Endothelial cell of umbilical vein (primary cell): ENCODE measurements at regions of chr2 and their contacts with region 1.

Region 1: GRCh38 chr2:41853427-41854216 is 194.2 kb upstream of the PKDCC start:
- DNase-seq: peak; percentile 53
- H3K4me3 ChIP-seq: no peak overlapping the region
- H3K27ac ChIP-seq: no peak overlapping the region
- H3K4me1 ChIP-seq: no peaks in the 10 kb centered on the region
- H3K27me3 ChIP-seq: peaks cover 4% of the 10 kb centered on the region in 2 experiments
- CTCF ChIP-seq: peak; percentile 53 to 66
- POLR2A ChIP-seq: no peak

Region 2: GRCh38 chr2:41527525-41528323 is 325.9 kb before region 1 on chr2:
- CTCF ChIA-PET with region 1: no interaction called
- POLR2A ChIA-PET with region 1: no interaction called
- dilution Hi-C with region 1: no loop called
- intact Hi-C with region 1: no loop called
- DNase-seq: no peak
- H3K4me3 ChIP-seq: no peak overlapping the region
- H3K27ac ChIP-seq: no peak overlapping the region
- H3K4me1 ChIP-seq: no peaks in the 10 kb centered on the region
- H3K27me3 ChIP-seq: no peaks in the 10 kb centered on the region
- CTCF ChIP-seq: no peak
- POLR2A ChIP-seq: no peak

Region 3: DNA sequence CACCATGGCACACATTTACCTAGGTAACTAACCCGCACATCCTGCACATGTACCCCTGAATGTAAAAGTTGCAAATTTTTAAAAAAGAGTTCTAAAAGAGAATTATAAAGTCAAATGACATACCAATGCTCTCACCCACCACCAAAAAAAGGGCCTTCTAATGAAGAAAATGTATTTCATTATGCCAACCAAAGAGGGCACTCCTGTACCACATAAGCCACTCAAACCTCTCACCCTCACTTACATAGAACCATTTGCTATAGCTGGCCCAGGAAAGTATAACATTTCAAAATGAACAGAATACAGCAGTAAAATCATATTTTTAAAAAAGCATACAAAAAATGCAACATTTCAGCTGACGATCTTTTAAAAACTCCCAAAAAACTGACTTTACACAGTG is 47.3 kb before region 1 on chr2:
- CTCF ChIA-PET with region 1: no interaction called
- POLR2A ChIA-PET with region 1: no interaction called
- dilution Hi-C with region 1: no loop called
- intact Hi-C with region 1: no loop called
- DNase-seq: no peak
- H3K4me3 ChIP-seq: no peak overlapping the region
- H3K27ac ChIP-seq: no peak overlapping the region
- H3K4me1 ChIP-seq: no peaks in the 10 kb centered on the region
- H3K27me3 ChIP-seq: no peaks in the 10 kb centered on the region
- CTCF ChIP-seq: no peak
- POLR2A ChIP-seq: no peak

Region 4: GRCh38 chr2:41840702-41841551 is 12.7 kb before region 1 on chr2:
- CTCF ChIA-PET with region 1: interaction called, 28 read pairs
- POLR2A ChIA-PET with region 1: no interaction called
- dilution Hi-C with region 1: no loop called
- intact Hi-C with region 1: no loop called
- DNase-seq: peak; percentile 94
- H3K4me3 ChIP-seq: peak overlapping the region; percentile 27 to 69 (median 60)
- H3K27ac ChIP-seq: no peak overlapping the region
- H3K4me1 ChIP-seq: peaks cover 7% of the 10 kb centered on the region
- H3K27me3 ChIP-seq: peaks cover 15 to 18% of the 10 kb centered on the region in 2 experiments
- CTCF ChIP-seq: peak; percentile 92 to 96
- POLR2A ChIP-seq: peak; percentile 28

Region 5: DNA sequence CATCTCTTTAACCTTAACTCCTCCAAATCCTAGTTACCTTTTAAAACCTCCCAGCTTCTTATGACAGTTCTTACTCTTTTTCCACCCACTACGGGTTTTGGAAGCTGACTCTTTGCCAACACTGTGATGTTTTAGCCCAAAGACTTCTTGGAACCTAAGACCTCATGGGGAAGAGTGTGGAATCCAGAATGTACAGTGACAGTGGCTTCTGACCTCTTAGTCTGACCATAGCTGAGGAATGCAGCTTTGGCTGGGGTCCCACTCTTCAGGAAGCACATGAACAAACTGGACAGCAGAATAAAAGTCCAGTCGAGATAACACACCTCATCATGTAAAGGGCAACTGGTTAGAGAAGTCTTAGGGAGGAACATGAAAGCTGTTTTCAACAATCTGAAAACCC is 33.1 kb after region 1 on chr2:
- CTCF ChIA-PET with region 1: interaction called, 11 read pairs
- POLR2A ChIA-PET with region 1: no interaction called
- dilution Hi-C with region 1: no loop called
- intact Hi-C with region 1: no loop called
- DNase-seq: peak; percentile 21
- H3K4me3 ChIP-seq: no peak overlapping the region
- H3K27ac ChIP-seq: no peak overlapping the region
- H3K4me1 ChIP-seq: no peaks in the 10 kb centered on the region
- H3K27me3 ChIP-seq: peaks cover 2 to 3% of the 10 kb centered on the region in 2 experiments
- CTCF ChIP-seq: no peak
- POLR2A ChIP-seq: no peak

Region 6: GRCh38 chr2:42060718-42061619 is 207.3 kb after region 1 on chr2:
- CTCF ChIA-PET with region 1: interaction called, 10 read pairs
- POLR2A ChIA-PET with region 1: no interaction called
- dilution Hi-C with region 1: no loop called
- intact Hi-C with region 1: no loop called
- DNase-seq: no peak
- H3K4me3 ChIP-seq: no peak overlapping the region
- H3K27ac ChIP-seq: no peak overlapping the region
- H3K4me1 ChIP-seq: no peaks in the 10 kb centered on the region
- H3K27me3 ChIP-seq: no peaks in the 10 kb centered on the region
- CTCF ChIP-seq: no peak
- POLR2A ChIP-seq: no peak

Region 7: GRCh38 chr2:42077343-42077742 is 223.7 kb after region 1 on chr2:
- CTCF ChIA-PET with region 1: interaction called, 372 read pairs
- POLR2A ChIA-PET with region 1: no interaction called
- dilution Hi-C with region 1: loop called (anchors 25 kb)
- intact Hi-C with region 1: no loop called
- DNase-seq: no peak
- H3K4me3 ChIP-seq: no peak overlapping the region
- H3K27ac ChIP-seq: no peak overlapping the region
- H3K4me1 ChIP-seq: no peaks in the 10 kb centered on the region
- H3K27me3 ChIP-seq: peaks cover 3 to 8% of the 10 kb centered on the region in 2 experiments
- CTCF ChIP-seq: no peak
- POLR2A ChIP-seq: no peak

Region 8: GRCh38 chr2:42360890-42361727 is 507.5 kb after region 1 on chr2 and contains the start of gene COX7A2L:
- CTCF ChIA-PET with region 1: no interaction called
- POLR2A ChIA-PET with region 1: no interaction called
- dilution Hi-C with region 1: no loop called
- intact Hi-C with region 1: no loop called
- DNase-seq: peak; percentile 97
- H3K4me3 ChIP-seq: peak within 1 kb of the TSS; percentile 61 to 92 (median 77)
- H3K27ac ChIP-seq: peak within 1 kb of the TSS; percentile 97
- H3K4me1 ChIP-seq: peaks cover 18% of the 10 kb centered on the region
- H3K27me3 ChIP-seq: peaks cover 1 to 2% of the 10 kb centered on the region in 2 experiments
- CTCF ChIP-seq: peak in 1 of 2 donors; percentile 33
- POLR2A ChIP-seq: peak; percentile 73
- total RNA-seq, gene COX7A2L: 94.2 and 101 TPM in 2 replicates